ENCODE measurements at regions of chr1 and their contacts with region 1.

Region 1: DNA sequence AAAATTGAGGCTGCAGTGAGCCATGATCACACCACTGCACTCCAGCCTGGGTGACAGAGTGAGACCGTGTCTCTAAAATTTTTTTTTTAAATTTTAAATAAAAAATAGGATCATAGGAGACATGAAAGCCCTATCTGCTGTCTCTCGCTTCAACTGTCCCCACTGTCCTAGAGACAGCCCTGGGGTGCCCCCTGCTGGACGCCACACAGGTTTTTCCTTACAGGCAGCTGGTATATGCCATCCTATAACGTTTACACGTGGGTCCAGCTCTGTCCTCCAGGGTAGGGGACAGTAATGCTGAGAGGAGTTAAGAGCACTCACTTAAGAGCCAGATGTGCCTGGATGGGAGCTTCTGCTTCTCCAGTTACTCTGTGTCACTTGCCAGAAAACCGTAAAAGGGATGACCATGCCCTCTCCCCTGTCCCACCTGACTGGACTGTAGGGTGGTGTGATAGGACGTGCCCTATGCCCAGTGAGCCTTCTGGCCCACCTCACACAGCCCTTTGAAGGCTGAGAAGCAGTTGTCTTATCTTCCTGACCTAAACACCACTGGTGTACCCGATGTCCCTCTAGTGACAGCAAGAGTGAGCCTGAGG is 8.5 kb downstream of the FBXO2 start:
- DNase-seq: peak; percentile 72 to 93
- H3K4me3 ChIP-seq: no peak overlapping the region
- H3K4me1 ChIP-seq: peaks cover 12% of the 10 kb centered on the region
- H3K27me3 ChIP-seq: peaks cover 14% of the 10 kb centered on the region

Region 2: GRCh38 chr1:10960411-10961299 is 685.1 kb before region 1 on chr1:
- in situ Hi-C with region 1: no loop called
- DNase-seq: peak; percentile 55 to 95
- H3K4me3 ChIP-seq: no peak overlapping the region
- H3K4me1 ChIP-seq: no peaks in the 10 kb centered on the region; the same call in 1 of the 2 replicates
- H3K27me3 ChIP-seq: no peaks in the 10 kb centered on the region

Region 3: GRCh38 chr1:11037740-11038182 is 608.0 kb before region 1 on chr1:
- in situ Hi-C with region 1: loop called (anchors 10 kb)
- DNase-seq: peak; percentile 84 to 91
- H3K4me3 ChIP-seq: no peak overlapping the region
- H3K4me1 ChIP-seq: no peaks in the 10 kb centered on the region
- H3K27me3 ChIP-seq: no peaks in the 10 kb centered on the region

Region 4: GRCh38 chr1:11237356-11237755 is 408.4 kb before region 1 on chr1:
- in situ Hi-C with region 1: loop called (anchors 5 kb)
- DNase-seq: no peak
- H3K4me3 ChIP-seq: no peak overlapping the region
- H3K4me1 ChIP-seq: no peaks in the 10 kb centered on the region
- H3K27me3 ChIP-seq: no peaks in the 10 kb centered on the region

Region 5: DNA sequence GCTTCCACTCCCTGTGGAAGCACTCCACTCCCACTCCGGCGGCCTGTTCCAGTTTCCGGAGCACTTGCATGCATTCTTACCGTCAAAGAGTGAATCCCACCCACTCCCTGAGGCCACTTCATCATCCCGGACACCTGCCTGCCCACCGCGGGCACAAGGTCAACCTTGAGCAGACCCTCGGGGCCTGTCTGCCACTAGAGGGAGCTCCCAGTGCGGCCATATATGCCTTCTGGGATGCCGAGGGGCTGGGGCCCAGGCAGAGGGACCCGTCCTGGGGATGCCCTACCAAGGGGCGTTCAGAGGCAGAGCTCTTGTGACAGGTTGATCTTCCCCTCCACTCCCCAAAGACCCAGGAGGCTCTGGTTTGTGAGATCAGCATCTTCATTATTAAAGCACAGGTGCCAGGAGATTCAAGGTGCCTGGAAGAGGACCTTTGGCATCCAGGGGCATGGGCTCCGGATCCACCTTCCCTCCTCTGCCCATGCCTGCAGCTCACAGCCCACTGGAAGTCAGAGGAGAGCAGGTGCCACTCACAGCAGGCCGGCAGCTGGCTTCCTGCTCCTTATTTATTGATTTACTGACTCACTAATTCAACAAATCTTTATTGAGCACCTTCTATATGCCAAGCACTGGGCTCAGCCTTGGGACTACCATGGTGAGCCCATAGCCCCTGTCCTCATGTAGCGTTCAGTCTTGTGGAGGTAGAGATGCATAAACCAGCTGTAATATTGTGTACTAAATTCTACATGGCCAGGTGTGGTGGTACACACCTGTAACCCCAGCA is 325.4 kb before region 1 on chr1:
- in situ Hi-C with region 1: loop called (anchors 10 kb)
- DNase-seq: peak in 1 of 2 experiments; percentile 75
- H3K4me3 ChIP-seq: no peak overlapping the region
- H3K4me1 ChIP-seq: no peaks in the 10 kb centered on the region
- H3K27me3 ChIP-seq: peaks cover 2% of the 10 kb centered on the region; the same call in 1 of the 2 replicates

Region 6: GRCh38 chr1:11858968-11859871 is 213.5 kb after region 1 on chr1:
- in situ Hi-C with region 1: no loop called
- DNase-seq: peak; percentile 39 to 89
- H3K4me3 ChIP-seq: no peak overlapping the region
- H3K4me1 ChIP-seq: no peaks in the 10 kb centered on the region
- H3K27me3 ChIP-seq: peaks cover 31% of the 10 kb centered on the region